Dorsolateral prefrontal cortex (tissue), 120 donors: ENCODE measurements at regions of chr17 and their contacts with region 1.

Region 1: GRCh38 chr17:36948717-36949460 is at the start of gene AATF:
- DNase-seq: peak; percentile 94 to 98 (median 96)
- H3K4me3 ChIP-seq: peak within 1 kb of the TSS; percentile 52 to 99 (median 90)
- H3K27ac ChIP-seq: peak within 1 kb of the TSS in 58 of 59 donors; percentile 31 to 94 (median 84)
- H3K27me3 ChIP-seq: peaks cover 0 to 39% (median 33%) of the 10 kb centered on the region in 45 donors
- CTCF ChIP-seq: peak in 27 of 56 donors; percentile 4 to 47 (median 28)
- total RNA-seq, gene AATF: 23.9 to 55.3 (median 33.6) TPM

Region 2: DNA sequence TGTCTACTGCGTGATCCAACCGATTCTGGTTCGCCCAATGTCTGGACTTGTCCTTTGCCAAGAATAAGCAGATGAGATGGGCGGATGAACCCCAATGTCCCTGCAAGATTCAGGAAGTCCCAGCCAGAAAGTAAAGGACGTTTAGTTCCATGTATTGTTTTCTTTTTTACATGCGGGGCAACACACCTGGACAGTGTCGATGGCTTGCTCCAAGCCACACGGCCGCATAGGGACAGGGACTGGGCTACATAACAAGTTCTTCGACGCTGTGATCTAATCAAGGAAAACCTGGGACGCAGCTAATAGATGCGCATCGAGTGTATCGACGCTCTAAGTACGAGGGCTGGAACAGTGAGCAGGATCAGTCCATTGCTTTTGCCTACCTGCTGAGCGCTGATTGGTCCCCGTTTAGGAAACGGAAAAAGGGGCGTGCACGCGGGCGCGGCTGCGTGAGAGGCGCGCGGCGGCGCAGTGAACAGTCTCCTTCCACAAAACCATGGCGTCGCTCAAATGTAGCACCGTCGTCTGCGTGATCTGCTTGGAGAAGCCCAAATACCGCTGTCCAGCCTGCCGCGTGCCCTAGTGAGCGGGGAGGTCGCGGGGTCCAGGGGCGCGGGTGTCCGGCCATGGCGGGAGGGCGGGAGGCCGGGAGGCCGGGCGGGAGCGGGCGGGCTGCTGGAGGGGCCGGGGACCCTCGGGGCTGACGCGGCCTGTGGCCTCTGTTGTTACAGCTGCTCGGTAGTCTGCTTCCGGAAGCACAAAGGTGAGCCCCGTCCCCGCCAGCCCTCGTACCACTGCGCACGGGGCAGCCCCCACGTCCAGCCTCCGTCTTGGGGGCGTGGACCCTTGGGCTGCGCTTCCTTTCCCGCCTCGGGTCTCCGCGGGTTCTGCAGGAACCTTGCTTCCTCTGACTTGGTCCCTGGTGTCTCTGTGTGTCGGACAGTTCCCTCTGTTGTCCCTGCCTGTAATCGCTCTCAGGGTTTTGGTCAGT is 462.4 kb before region 1 on chr17 and contains the start of gene ZNHIT3:
- intact Hi-C with region 1: loop called in 1 of 2 experiments (anchors 10 kb)
- DNase-seq: peak; percentile 84 to 95 (median 93)
- H3K4me3 ChIP-seq: peak within 1 kb of the TSS; percentile 72 to 100 (median 96)
- H3K27ac ChIP-seq: peak within 1 kb of the TSS in 51 of 59 donors; percentile 10 to 89 (median 77)
- H3K27me3 ChIP-seq: no peaks in the 10 kb centered on the region
- CTCF ChIP-seq: peak in 37 of 56 donors; percentile 7 to 62 (median 36)
- total RNA-seq, gene ZNHIT3: 26.6 to 61.2 (median 43.9) TPM

Region 3: DNA sequence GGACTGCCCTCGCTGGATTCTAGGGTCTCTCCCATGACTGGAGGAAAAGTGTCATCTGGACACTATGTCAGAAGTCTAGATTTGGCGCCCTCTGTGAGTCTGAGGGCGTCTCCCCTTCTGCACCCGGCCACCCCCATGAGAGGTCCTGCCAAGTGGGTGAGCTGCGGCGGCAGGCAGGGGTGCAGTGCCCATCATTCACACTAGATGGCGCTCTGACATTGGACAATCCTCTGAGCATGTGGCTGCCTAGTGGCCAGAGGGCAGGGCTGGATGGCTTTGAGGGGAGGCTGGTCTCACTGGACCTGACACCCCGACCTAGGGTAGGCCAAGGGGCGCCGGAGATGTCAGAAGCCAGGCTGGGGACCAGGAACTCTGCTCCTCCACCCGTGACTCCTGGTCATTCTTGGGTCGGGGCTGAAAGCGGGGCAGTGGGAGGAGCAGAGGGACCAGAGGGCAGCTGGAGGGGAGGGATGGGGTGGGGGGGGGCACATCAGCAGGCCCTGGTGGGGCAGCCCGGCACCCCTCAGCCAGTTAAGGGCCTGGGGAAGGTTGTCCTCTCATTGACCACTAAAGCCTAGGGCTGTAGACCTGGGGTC is 319.5 kb before region 1 on chr17:
- intact Hi-C with region 1: loop called in 1 of 2 experiments (anchors 10 kb)
- DNase-seq: peak; percentile 68 to 90 (median 80)
- H3K4me3 ChIP-seq: no peak overlapping the region
- H3K27ac ChIP-seq: no peak overlapping the region
- H3K27me3 ChIP-seq: no peaks in the 10 kb centered on the region
- CTCF ChIP-seq: peak; percentile 83 to 100 (median 99)

Region 4: GRCh38 chr17:36722121-36722902 is 226.6 kb before region 1 on chr17:
- intact Hi-C with region 1: loop called in 1 of 2 experiments (anchors 10 kb)
- DNase-seq: peak in 8 of 10 donors; percentile 34 to 81 (median 48)
- H3K4me3 ChIP-seq: peak overlapping the region; percentile 32 to 71 (median 59)
- H3K27ac ChIP-seq: peak overlapping the region in 41 of 59 donors; percentile 3 to 84 (median 61)
- H3K27me3 ChIP-seq: peaks cover 0 to 4% (median 0%) of the 10 kb centered on the region in 45 donors
- CTCF ChIP-seq: peak in 6 of 56 donors; percentile 10 to 32 (median 20)

Region 5: GRCh38 chr17:36877771-36878170 is 71.1 kb before region 1 on chr17:
- intact Hi-C with region 1: no loop called
- DNase-seq: no peak
- H3K4me3 ChIP-seq: no peak overlapping the region
- H3K27ac ChIP-seq: no peak overlapping the region
- H3K27me3 ChIP-seq: peaks cover 0 to 59% (median 24%) of the 10 kb centered on the region in 45 donors
- CTCF ChIP-seq: no peak

Region 6: GRCh38 chr17:37047631-37048104 is 98.8 kb after region 1 on chr17:
- intact Hi-C with region 1: loop called in 1 of 2 experiments (anchors 2 kb)
- DNase-seq: peak; percentile 81 to 96 (median 88)
- H3K4me3 ChIP-seq: no peak overlapping the region
- H3K27ac ChIP-seq: peak overlapping the region in 2 of 59 donors; percentile 9 to 69
- H3K27me3 ChIP-seq: no peaks in the 10 kb centered on the region
- CTCF ChIP-seq: peak; percentile 83 to 98 (median 91)

Region 7: DNA sequence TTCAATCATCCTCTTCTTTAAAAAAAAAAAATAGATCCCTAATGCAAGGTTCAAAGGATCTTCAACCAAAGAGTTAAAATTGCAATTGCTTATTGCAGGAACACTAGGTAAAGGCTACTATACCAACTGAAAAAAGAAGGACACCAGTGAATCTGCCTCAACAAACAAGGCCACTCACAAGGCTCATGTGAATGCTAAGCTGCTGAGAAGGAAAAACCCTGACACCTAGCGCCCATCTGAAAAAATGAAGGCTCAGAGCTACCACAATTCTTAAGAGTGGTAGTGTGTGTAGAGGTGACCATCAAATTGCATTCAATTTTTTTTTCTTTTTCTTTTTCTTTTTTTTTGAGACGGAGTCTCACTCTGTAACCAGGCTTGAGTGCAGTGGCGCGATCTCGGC is 225.3 kb after region 1 on chr17:
- intact Hi-C with region 1: loop called in 1 of 2 experiments (anchors 10 kb)
- DNase-seq: peak in 4 of 10 donors; percentile 20 to 65 (median 42)
- H3K4me3 ChIP-seq: no peak overlapping the region
- H3K27ac ChIP-seq: peak overlapping the region in 6 of 59 donors; percentile 9 to 94 (median 60)
- H3K27me3 ChIP-seq: no peaks in the 10 kb centered on the region
- CTCF ChIP-seq: peak; percentile 23 to 77 (median 61)

Region 8: DNA sequence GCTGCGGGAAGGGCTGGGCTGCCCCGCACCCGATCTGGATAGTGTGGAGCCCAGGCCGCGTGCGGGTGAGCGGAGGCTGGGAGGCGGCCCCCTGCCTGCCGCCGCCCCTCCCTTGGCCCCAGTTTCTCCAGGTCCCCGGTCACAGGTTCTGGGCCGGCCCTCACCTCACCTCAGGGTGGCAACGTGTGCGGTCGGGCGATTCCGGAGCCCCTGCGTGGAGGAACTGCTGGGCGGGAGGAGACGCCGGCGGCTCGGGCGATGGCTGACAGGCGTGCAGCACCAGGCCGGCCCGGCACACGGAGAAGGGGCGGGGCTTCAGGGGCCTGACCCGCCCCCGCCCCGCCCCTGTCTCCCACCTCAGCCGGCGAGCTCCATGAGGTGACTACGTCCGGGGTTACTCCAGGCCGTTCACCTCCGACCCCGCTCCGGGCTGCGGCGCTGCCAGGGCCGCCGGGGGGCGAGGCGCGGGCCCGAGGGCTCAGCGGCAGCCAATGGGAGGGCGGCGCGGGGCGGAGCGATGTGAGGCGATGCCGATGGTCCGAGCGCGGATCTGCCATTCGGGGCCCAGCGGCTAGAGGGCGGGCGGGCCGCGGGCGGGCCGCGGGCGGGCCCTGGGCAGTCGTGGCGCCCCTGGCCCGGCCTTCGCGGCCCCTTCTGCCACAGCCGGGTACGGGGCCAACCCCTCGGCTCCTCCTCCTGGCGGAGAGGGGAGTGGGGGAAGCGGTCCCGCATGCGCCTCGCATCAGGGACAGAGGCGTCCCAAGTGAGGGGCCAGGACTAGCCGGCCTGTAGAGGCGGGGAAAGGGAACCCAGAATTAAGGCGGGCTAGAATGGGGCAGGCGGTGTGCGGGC is 410.2 kb after region 1 on chr17:
- intact Hi-C with region 1: loop called in 1 of 2 experiments (anchors 5 kb)
- DNase-seq: peak; percentile 86 to 97 (median 92)
- H3K4me3 ChIP-seq: peak overlapping the region; percentile 63 to 97 (median 88)
- H3K27ac ChIP-seq: peak overlapping the region; percentile 18 to 97 (median 92)
- H3K27me3 ChIP-seq: no peaks in the 10 kb centered on the region
- CTCF ChIP-seq: peak in 46 of 56 donors; percentile 9 to 73 (median 45)